ENCODE measurements at regions of chr12 and their contacts with region 1.

Region 1: DNA sequence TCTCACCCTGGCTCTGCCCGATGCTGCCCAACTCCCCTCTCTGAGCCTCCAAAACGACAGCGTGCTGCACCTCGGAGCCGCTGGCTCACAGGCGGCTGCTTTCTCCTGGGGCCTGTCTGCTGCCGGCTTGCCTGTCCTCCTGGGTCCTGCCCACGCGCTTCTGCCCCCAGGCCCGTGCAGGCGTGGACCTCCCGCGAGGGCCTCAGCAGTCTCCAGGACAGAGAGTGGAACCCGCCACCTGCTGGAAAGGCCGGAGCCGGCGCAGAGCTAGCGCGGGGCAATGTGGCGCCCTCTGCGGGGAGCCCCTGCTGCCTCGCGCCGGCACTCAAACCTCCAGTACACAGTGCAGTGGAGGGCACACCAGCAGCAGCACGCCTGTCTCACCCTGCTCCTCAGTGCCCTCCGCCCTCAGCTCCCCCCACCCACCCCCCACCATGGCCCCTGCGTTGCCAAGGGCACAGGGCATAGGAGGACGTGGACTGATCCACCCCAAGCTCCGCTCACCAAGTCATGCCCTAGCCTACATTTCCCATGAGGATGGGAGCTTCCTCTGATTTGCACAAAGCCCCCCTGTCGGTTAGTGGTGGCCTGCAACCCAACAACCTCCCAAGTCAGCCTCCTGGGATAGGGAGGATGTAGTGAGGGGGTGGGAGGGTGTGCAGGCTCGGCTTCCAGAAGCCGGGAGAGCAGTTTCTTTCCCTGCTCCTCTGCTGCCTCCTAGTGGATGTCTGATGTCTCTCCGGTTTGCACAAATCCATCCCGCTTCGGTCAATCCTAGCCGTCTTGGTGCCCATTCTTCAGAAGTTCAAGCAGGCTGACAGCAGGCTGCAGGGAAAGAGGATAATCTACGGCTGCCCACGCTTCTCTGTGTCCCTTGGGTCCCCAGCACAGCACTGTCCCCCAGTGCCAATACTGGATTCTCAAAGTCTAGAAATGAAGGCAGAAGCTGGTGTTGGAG is 25.2 kb downstream of the KRT8 start:
- DNase-seq: peak; percentile 82 to 98
- ATAC-seq: peak; percentile 88 to 90
- H3K4me3 ChIP-seq: 0 out of 3 replicates have a peak overlapping the region, but pooled peaks have one; percentile 14
- H3K27ac ChIP-seq: peak overlapping the region; percentile 94 to 97
- H3K4me1 ChIP-seq: peaks cover 61% of the 10 kb centered on the region
- CTCF ChIP-seq: peak; percentile 97
- EP300 ChIP-seq: no peak
- POLR2A ChIP-seq: 0 out of 2 replicates have a peak, but pooled peaks have one; percentile 23
- RAD21 ChIP-seq: peak; percentile 90 to 99

Region 2: DNA sequence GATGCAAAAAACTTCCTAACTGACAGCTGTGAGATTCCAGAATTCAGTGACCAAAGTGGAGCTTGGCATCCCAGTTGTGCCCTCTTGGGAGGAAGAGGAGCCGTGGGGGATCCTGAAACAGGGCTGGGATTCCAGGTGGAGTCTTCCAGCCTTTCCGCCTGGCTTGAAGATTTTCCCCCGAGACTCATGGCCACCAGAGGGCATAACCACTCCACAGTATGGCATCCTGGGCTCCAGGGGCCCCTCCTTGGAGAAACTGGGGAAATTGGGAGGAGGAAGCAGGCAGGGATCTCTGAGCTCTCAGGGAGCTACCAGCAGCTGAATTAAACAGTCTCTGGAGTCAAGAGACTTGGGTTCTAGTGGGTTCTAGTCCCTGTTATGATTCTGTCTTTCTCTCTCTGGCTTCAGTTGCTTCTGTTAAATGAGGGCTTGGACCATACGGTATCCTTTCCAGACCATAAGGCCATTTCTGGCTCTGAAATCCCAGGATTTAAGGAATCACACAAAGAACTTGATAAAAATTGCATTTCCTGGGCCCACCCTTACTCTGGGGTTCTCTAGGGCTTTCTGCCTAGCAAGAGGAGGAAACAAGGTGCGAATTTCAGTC is 875.5 kb before region 1 on chr12:
- CTCF ChIA-PET with region 1: interaction called, 10 read pairs
- POLR2A ChIA-PET with region 1: no interaction called
- DNase-seq: peak; percentile 69 to 78
- ATAC-seq: peak; percentile 73 to 83
- H3K4me3 ChIP-seq: no peak overlapping the region
- H3K27ac ChIP-seq: no peak overlapping the region
- H3K4me1 ChIP-seq: 0 out of 3 replicates have a peak, but pooled peaks cover 3% of the 10 kb centered on the region
- CTCF ChIP-seq: peak; percentile 88
- EP300 ChIP-seq: no peak
- POLR2A ChIP-seq: no peak
- RAD21 ChIP-seq: peak; percentile 90 to 95

Region 3: GRCh38 chr12:52156736-52157565 is 722.7 kb before region 1 on chr12:
- CTCF ChIA-PET with region 1: interaction called, 833 read pairs
- POLR2A ChIA-PET with region 1: no interaction called
- DNase-seq: peak; percentile 81 to 88
- ATAC-seq: peak; percentile 72 to 78
- H3K4me3 ChIP-seq: no peak overlapping the region
- H3K27ac ChIP-seq: peak overlapping the region; percentile 100
- H3K4me1 ChIP-seq: peaks cover 63% of the 10 kb centered on the region
- CTCF ChIP-seq: peak; percentile 97
- EP300 ChIP-seq: no peak
- POLR2A ChIP-seq: no peak
- RAD21 ChIP-seq: peak; percentile 99 to 100

Region 4: DNA sequence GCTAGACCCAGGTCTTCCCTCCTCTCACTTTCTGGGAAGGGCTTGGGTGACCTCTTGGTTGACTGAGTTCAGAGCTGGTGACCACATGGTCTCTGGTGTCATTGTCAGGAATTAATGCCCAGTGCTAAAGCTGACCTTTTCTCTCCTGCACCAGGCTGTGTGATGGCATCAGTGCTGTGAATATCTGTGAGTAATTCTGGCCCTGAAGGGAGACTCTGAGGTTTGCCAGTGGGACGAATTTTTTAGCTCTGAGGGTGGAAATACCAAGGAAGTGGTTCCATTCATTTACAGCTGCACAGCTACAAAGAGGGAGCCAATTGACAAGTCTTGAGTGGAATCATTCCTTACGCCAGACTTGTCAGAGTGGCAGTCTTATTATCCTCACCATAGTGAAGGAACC is 611.5 kb before region 1 on chr12:
- CTCF ChIA-PET with region 1: interaction called, 11 read pairs
- POLR2A ChIA-PET with region 1: no interaction called
- DNase-seq: no peak
- ATAC-seq: no peak
- H3K4me3 ChIP-seq: no peak overlapping the region
- H3K27ac ChIP-seq: peak overlapping the region; percentile 7 to 65; a peak in 3 of 6 replicates
- H3K4me1 ChIP-seq: peaks cover 13% of the 10 kb centered on the region
- CTCF ChIP-seq: no peak
- EP300 ChIP-seq: no peak
- POLR2A ChIP-seq: no peak
- RAD21 ChIP-seq: no peak

Region 5: GRCh38 chr12:52333326-52333725 is 546.3 kb before region 1 on chr12:
- CTCF ChIA-PET with region 1: interaction called, 42 read pairs
- POLR2A ChIA-PET with region 1: no interaction called
- DNase-seq: no peak
- ATAC-seq: no peak
- H3K4me3 ChIP-seq: no peak overlapping the region
- H3K27ac ChIP-seq: no peak overlapping the region
- H3K4me1 ChIP-seq: peaks cover 24% of the 10 kb centered on the region
- CTCF ChIP-seq: no peak
- EP300 ChIP-seq: no peak
- POLR2A ChIP-seq: no peak
- RAD21 ChIP-seq: no peak

Region 6: GRCh38 chr12:52442600-52443061 is 437.0 kb before region 1 on chr12:
- CTCF ChIA-PET with region 1: interaction called, 10 read pairs
- POLR2A ChIA-PET with region 1: no interaction called
- DNase-seq: peak; percentile 51 to 77
- ATAC-seq: peak; percentile 87 to 89
- H3K4me3 ChIP-seq: no peak overlapping the region
- H3K27ac ChIP-seq: peak overlapping the region; percentile 56 to 79
- H3K4me1 ChIP-seq: peaks cover 28% of the 10 kb centered on the region
- CTCF ChIP-seq: peak; percentile 35; the same call in 2 of the 3 replicates
- EP300 ChIP-seq: peak in 1 of 2 experiments; percentile 53; a peak in 1 of 5 replicates
- POLR2A ChIP-seq: no peak
- RAD21 ChIP-seq: peak; percentile 64 to 69

Region 7: DNA sequence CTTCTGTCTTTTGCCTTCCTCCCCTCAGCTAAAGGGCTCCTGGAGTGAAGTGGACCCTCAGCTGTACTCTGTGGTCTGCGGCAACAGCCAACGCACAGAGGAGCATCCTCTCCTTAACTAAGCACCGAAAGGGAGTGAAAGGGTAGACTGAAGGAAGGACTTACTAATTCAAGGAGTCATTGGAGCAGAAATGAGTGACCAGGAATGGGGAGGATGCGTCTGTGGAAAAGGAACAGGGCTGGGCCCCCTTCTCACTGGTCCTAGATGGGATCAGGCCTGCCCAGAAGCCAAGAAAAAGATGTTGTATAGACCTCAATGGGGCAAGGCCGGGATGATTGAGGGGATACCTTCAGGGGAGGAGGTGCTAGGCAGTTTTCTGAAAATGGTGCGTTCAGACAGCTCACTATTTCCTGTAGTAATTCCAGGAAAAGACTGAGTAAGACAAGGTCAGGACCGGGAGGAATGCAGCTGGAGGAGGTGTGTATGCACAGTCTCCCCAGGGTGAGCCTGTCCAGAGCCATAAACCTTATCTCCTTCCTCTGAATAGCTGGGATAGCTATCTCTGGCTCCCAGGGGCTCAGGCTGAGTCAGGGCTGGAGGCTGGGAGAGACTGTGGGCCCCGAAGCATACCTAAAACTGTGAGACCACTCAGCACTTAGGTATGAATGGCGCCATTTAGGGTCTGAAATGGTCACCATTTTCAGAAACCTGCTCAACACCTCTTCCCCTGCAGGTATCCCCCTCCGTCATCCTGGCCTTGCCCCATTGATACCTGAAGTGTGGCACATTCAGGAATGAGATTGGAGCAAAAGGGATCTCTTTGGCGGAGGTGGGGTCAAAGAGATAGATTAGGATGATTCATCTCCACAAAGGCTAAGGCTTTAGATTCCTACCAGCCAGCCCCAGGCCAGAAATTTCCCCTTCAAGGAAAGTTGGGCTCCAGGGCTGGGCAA is 45.4 kb after region 1 on chr12:
- CTCF ChIA-PET with region 1: interaction called, 55 read pairs
- POLR2A ChIA-PET with region 1: interaction called, 5 read pairs
- DNase-seq: peak; percentile 85 to 94
- ATAC-seq: peak; percentile 57 to 80
- H3K4me3 ChIP-seq: peak overlapping the region; percentile 27; the same call in 2 of the 3 replicates
- H3K27ac ChIP-seq: peak overlapping the region; percentile 96 to 97
- H3K4me1 ChIP-seq: peaks cover 85% of the 10 kb centered on the region
- CTCF ChIP-seq: no peak
- EP300 ChIP-seq: peak; percentile 62 to 90; a peak in 4 of 5 replicates
- POLR2A ChIP-seq: no peak
- RAD21 ChIP-seq: peak in 1 of 2 experiments; percentile 32; a peak in 2 of 5 replicates

Measured in A549 (cell line).